ENCODE measurements at regions of chr4 and their contacts with region 1.

Region 1: GRCh38 chr4:16001484-16001858 is 38.5 kb upstream of the FGFBP2 start:
- DNase-seq: no peak
- ATAC-seq: peak; percentile 93

Region 2: DNA sequence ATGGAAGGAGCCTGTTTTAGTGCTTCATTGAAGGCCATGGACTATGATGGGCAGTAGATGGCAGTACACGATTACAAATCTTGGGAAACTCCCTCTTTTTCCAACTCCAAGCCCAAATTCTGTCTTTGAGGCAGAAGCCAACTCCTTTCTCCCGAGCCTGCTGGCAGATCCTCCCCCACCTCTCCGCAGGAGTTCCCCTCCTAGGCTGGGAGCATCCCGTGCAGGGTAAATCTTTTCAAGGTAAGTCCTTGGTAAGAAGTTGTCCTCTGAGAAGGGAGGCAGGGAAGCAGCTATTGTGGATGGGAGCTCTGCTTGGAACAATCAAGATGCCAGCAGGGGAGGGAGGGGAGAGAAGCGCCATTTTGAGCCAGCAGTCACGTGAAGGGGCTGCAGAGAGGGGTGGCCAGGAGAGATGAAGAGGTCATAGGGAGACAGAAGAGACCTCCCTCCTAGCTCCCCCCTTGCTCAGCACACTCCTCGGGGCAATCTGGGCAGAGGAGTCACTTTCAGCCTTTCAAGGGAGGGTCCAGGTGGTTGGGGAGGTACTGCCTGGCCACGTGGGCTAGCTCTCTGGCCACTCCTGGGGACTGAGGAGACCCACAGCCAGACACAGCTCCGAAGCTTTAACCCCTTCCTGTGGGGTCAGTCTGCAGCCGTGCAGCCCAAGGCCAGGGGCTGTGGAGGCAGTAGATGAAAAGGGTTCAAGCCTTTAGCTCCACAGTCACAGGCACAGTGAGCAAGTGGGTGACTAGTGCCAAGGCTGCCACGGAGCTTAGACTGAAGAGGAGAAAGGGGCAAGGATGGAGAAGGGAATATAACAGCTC is 522.2 kb before region 1 on chr4:
- intact Hi-C with region 1: loop called (anchors 5 kb)
- DNase-seq: no peak
- ATAC-seq: peak; percentile 82

Region 3: DNA sequence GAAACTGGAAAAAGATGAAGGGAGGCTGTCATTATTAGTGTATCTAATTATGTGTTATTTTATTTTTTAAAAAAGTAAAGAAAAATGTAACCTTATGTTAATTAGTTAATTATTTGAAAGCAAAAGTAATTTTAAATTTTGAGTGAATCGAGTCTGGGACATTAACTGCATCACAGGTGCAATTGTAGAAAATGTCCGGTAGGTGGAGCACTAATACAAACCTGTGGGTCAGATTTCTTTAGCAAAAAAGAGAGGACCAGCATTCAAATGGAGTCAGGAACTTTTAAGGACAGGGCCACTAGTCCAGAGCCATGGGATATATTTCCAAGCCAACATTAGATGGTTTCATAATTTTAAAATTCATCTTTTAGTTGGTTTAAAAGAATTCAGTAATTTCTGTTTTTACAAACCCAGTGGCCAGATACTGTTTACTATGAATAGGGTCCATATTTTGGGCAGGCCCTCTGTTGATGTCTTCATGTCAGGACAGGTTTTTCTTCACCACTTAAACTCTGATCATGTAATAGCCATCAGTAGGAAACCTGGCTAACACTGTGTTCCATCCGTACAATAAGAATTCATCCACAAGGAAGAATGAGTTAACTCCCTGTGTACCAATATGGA is 271.4 kb before region 1 on chr4:
- intact Hi-C with region 1: loop called (anchors 5 kb)
- DNase-seq: no peak
- ATAC-seq: no peak

Region 4: DNA sequence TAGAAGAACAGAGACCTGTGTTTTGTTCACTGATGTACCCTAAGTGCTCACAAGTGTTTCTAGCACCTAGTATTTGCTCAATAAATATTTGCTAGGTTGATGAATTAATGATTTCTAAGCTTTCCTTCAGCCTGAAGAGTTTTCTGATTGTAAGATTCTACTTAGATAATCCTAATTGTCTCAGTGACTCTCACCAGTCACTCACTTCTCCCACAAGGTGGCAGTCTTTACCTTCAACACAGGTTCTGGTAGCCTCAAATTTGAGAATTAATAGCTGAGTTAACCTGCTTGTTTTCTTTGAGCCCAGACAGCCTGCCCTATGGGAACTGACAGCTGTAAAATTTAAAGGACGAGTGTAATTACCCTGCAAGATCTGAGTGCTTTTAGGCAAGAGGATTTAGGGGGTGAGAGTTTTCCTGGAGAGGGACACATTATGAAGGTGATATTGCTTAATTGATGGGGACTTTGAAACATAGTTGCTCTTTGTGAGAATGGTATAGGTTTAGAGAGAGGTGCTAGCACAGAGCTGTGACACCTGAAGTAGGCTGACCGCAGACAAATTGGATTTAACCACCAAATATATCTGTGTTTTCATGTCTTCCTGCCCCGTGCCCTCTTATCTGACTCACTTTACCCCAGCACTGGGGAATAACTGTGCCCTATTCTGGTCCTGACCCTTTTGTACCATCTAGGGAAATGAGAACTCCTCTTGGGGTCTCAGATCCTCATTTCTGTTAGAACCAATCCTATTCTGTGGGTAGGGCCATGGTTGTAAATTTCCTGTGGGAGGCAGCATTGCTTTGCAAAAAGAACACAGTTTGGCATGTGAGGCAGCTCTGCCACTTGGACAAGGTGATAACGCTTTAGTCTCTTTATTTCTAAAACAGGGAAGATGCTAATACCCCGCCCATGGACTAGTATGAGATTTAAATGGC is 195.6 kb before region 1 on chr4:
- intact Hi-C with region 1: loop called (anchors 2 kb)
- DNase-seq: no peak
- ATAC-seq: peak; percentile 82

Region 5: DNA sequence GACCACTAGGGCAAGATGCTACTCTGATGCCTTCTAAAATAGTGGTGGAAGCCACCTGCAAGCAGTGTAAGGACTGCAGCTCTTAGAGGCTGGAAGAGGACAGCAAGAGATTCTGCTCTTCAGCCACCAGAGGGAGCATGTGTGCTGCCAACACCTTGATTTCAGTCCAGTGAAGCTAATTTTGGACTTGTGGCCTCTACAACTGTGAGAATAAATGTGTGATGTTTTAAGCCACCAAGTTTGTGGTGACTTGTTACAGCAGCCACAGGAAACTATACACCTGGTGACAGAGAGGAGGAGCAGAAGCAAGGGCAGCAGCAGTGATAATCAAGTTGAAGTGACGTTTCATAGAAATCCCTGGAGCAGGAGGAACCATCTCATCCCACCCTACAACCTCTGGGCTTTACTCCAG is 118.8 kb before region 1 on chr4:
- intact Hi-C with region 1: loop called (anchors 2 kb)
- DNase-seq: no peak
- ATAC-seq: peak; percentile 89

Region 6: GRCh38 chr4:15963001-15963451 is 38.4 kb before region 1 on chr4 and contains the start of gene FGFBP2:
- intact Hi-C with region 1: loop called (anchors 5 kb)
- DNase-seq: peak; percentile 69
- ATAC-seq: peak; percentile 67
- total RNA-seq, gene FGFBP2: 2.7 TPM

Region 7: GRCh38 chr4:16116493-16116990 is 115.1 kb after region 1 on chr4:
- intact Hi-C with region 1: no loop called
- DNase-seq: no peak
- ATAC-seq: no peak